Activated CD4-positive, alpha-beta T cell treated with anti-CD3 and anti-CD28 coated beads, Interleukin-2, amount 10 ng/mL, durations not matched to agents 7 days and 5 days (primary cell): ENCODE measurements at regions of chr9 and their contacts with region 1.

Region 1: GRCh38 chr9:35102926-35103659 is at the start of gene STOML2:
- DNase-seq: peak; percentile 95
- H3K4me3 Mint-ChIP-seq: peak within 1 kb of the TSS; percentile 98
- H3K27ac Mint-ChIP-seq: peak within 1 kb of the TSS; percentile 93
- H3K4me1 Mint-ChIP-seq: peaks cover 42% of the 10 kb centered on the region
- H3K27me3 Mint-ChIP-seq: no peaks in the 10 kb centered on the region
- total RNA-seq, gene STOML2: 104 to 108 TPM

Region 2: DNA sequence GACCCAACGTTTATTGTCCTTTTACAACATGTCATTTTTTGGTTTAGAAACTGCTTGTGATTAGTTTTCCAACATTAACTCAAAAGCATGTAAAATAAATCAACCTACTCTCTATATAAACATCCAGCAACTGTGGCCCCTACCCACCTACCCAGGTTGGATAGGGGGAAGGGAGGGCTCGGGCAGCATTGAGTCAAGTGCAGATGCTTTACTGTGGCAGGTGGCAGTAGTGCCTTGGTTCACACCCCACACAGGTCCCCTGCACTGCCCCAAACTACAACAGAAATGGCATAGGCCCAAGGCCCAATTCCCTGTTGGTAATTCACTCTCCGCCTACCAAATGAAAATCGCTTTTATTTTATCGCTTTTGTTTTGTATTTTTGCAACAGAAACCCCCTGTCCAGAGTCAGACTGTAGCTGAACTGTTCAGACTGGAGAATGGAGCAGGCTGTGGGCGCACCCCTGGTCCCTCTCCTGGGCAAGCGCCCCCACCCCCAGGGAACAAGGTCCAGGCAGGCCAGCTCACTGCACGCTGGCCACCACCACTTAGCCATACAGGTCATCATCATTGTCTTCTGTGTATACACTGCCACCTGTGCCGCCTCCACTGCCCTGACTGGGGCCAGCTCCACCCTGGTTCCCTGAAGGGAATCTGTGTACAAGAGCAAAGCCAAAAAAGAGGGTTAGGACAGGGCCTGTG is 46.4 kb before region 1 on chr9:
- CTCF ChIA-PET with region 1: no interaction called
- POLR2A ChIA-PET with region 1: no interaction called
- DNase-seq: no peak
- H3K4me3 Mint-ChIP-seq: no peak overlapping the region
- H3K27ac Mint-ChIP-seq: peak overlapping the region; percentile 52
- H3K4me1 Mint-ChIP-seq: no peaks in the 10 kb centered on the region
- H3K27me3 Mint-ChIP-seq: no peaks in the 10 kb centered on the region

Region 3: GRCh38 chr9:35079426-35080341 is 23.4 kb before region 1 on chr9 and contains the start of gene FANCG:
- CTCF ChIA-PET with region 1: interaction called, 95 read pairs
- POLR2A ChIA-PET with region 1: no interaction called
- DNase-seq: peak; percentile 89
- H3K4me3 Mint-ChIP-seq: peak within 1 kb of the TSS; percentile 97
- H3K27ac Mint-ChIP-seq: peak within 1 kb of the TSS; percentile 99
- H3K4me1 Mint-ChIP-seq: peaks cover 40% of the 10 kb centered on the region
- H3K27me3 Mint-ChIP-seq: no peaks in the 10 kb centered on the region
- total RNA-seq, gene FANCG: 117 to 123 TPM

Region 4: GRCh38 chr9:35116898-35117551 is 13.9 kb after region 1 on chr9:
- CTCF ChIA-PET with region 1: interaction called, 39 read pairs
- POLR2A ChIA-PET with region 1: interaction called, 6 read pairs
- DNase-seq: peak; percentile 96
- H3K4me3 Mint-ChIP-seq: peak overlapping the region; percentile 96
- H3K27ac Mint-ChIP-seq: peak overlapping the region; percentile 95
- H3K4me1 Mint-ChIP-seq: peaks cover 33% of the 10 kb centered on the region
- H3K27me3 Mint-ChIP-seq: peaks cover 2% of the 10 kb centered on the region

Region 5: GRCh38 chr9:35138682-35139470 is 35.8 kb after region 1 on chr9:
- CTCF ChIA-PET with region 1: no interaction called
- POLR2A ChIA-PET with region 1: no interaction called
- DNase-seq: no peak
- H3K4me3 Mint-ChIP-seq: no peak overlapping the region
- H3K27ac Mint-ChIP-seq: no peak overlapping the region
- H3K4me1 Mint-ChIP-seq: no peaks in the 10 kb centered on the region
- H3K27me3 Mint-ChIP-seq: no peaks in the 10 kb centered on the region

Region 6: GRCh38 chr9:35152936-35153335 is 49.8 kb after region 1 on chr9:
- CTCF ChIA-PET with region 1: no interaction called
- POLR2A ChIA-PET with region 1: no interaction called
- DNase-seq: no peak
- H3K4me3 Mint-ChIP-seq: no peak overlapping the region
- H3K27ac Mint-ChIP-seq: no peak overlapping the region
- H3K4me1 Mint-ChIP-seq: no peaks in the 10 kb centered on the region
- H3K27me3 Mint-ChIP-seq: no peaks in the 10 kb centered on the region

Region 7: DNA sequence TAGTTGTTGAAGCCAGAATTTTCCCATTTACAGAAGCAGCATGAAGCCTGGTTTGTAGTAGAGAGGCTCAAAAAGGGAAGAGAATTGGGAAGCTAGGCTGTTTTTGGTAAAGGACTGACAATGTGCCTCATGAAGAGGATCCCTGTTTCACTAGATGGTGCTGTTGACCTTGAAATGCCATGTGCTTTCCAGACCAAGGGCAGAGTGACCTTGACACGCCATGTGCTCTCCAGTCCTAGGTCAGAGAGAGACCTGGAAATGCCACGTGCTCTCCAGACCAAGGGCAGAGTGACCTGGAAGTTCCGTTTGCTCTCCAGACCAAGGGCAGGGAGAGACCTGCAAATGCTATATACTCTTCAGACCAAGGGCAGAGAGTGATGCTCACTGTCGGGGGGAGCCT is 90.7 kb after region 1 on chr9:
- CTCF ChIA-PET with region 1: no interaction called
- POLR2A ChIA-PET with region 1: no interaction called
- DNase-seq: no peak
- H3K4me3 Mint-ChIP-seq: no peak overlapping the region
- H3K27ac Mint-ChIP-seq: no peak overlapping the region
- H3K4me1 Mint-ChIP-seq: no peaks in the 10 kb centered on the region
- H3K27me3 Mint-ChIP-seq: peaks cover 2% of the 10 kb centered on the region